ENCODE measurements at regions of chr2 and their contacts with region 1.

Region 1: GRCh38 chr2:223601932-223602666 is at the start of gene SCG2:
- DNase-seq: peak; percentile 87
- H3K4me3 ChIP-seq: no peak within 1 kb of the TSS; the same call in 1 of the 2 replicates
- H3K27ac ChIP-seq: no peak within 1 kb of the TSS
- H3K27me3 ChIP-seq: no peaks in the 10 kb centered on the region
- CTCF ChIP-seq: peak; percentile 48
- polyA plus RNA-seq, gene SCG2: 1.5 and 1.8 TPM in 2 replicates

Region 2: DNA sequence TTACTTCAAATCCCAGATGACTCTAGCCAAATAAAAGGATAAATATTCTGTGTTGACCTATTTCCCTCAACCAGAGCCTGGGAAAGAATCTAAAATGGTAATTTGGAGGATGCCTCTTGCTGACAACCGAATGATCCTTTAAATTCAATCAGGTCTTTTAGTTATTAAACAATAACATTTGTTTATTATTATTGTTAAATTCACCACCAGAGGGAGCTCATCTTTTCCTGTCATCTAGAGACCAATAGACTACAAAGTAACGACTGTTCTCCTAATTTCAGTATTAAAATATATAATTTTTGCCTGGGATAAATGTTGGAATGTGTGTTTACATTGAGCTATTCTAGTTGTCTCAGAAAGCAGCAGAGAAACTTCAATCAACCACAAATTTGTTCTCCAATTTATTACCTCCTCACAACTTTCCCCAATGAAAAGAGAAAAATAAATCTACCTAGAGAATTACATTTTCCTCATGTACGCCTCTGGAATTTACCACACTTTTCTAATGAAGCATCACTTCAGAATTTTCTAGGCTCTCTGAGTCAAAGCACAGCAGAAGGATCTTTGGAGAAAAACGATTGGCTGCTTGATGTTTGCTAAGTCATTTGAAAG is 142.7 kb before region 1 on chr2:
- CTCF ChIA-PET with region 1: interaction called, 14 read pairs
- POLR2A ChIA-PET with region 1: no interaction called
- DNase-seq: no peak
- H3K4me3 ChIP-seq: no peak overlapping the region
- H3K27ac ChIP-seq: no peak overlapping the region
- H3K27me3 ChIP-seq: no peaks in the 10 kb centered on the region
- CTCF ChIP-seq: peak; percentile 44

Region 3: DNA sequence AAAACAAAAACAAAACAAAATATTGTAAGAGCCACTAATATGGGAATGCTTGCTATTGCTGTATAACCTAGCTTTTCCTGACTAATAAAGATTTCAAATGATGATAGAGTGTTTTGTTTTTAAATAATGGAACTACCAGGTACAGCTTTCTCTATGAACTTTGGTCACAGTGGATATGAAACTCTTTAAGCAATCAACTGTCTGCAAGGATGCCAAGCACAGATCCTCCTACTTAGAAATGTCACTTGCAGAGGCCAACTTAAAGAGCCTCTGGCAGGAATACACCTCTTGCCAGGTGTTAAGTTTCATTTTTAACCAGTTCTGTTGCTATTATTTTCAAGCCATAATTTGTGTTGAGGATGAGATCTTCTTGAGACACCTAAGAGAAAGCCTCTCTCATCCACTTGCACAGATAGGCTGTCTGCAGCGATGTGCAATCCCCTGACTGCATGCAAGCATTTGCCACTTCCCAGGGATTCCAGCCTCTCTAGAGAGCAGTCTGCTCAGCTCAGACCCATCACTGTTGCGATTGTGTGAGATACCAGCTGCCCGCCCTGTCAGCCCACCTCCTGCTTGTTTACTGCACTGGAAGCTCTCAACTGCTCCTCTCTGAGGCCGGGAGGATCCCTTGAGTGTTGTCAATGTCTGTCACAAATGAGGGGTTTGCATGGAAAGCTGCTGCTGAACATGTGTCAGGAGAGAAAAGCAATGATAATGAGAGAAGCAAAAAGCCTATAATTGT is 86.2 kb after region 1 on chr2:
- CTCF ChIA-PET with region 1: no interaction called
- POLR2A ChIA-PET with region 1: no interaction called
- DNase-seq: no peak
- H3K4me3 ChIP-seq: no peak overlapping the region
- H3K27ac ChIP-seq: no peak overlapping the region
- H3K27me3 ChIP-seq: no peaks in the 10 kb centered on the region
- CTCF ChIP-seq: no peak